CD4-positive, alpha-beta T cell (primary cell): ENCODE measurements at regions of chr1 and their contacts with region 1.

Region 1: GRCh38 chr1:156860113-156860627 is 495 bp upstream of the NTRK1 start:
- DNase-seq: peak; percentile 24 to 77 (median 50)
- ATAC-seq: peak; percentile 54
- H3K4me3 ChIP-seq: peak overlapping the region; percentile 52
- H3K4me3 Mint-ChIP-seq: peak overlapping the region; percentile 81
- H3K27ac ChIP-seq: no peak overlapping the region
- H3K27ac Mint-ChIP-seq: no peak overlapping the region
- H3K4me1 ChIP-seq: peaks cover 29% of the 10 kb centered on the region
- H3K4me1 Mint-ChIP-seq: peaks cover 30% of the 10 kb centered on the region
- H3K27me3 ChIP-seq: peaks cover 53 to 62% of the 10 kb centered on the region in 2 experiments
- H3K27me3 Mint-ChIP-seq: peaks cover 75% of the 10 kb centered on the region
- CTCF ChIP-seq: peak; percentile 87

Region 2: DNA sequence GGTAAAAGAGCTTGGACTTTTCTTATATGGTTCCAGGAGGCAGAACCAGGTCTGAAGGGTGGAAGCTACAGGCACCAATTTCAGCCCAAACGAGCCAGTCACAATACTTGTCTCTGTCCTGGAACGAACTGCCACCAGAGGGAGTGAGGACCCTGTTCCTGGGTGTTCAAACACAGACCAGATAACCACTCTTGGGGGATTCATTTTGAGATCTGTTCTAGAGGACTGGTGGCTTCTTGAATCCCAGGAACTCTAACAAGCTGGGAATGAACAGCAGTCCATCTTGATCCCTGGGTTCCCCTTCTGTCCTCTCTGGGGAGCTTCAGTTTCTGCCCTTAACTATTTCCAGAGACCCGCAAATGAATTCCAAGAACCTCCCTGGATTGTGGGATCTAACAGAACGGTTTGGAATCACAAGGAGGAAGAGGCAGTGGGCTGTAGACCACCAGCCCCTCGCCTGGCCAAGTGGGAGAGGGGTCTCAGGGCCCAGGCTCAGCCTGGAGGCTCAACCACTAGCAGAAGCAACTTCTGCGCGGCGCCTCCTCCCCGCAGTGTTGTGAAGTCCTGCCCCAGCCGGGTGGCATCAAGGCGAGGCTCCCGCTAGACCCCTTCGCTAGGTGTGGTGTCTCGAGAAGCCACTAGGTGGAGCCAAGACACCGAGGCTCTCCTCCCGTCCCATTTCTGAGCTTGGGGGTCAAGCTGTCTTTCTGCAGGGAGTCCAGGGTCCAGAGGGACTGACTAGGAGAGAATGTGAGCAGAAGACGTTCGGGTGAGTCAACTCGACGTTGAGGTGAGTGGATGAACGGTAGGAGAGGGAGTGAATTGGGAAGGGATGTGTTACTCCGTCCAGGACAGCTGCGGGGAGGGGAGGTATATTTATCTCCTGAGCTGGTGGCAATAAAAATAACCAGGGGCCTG is 170.9 kb before region 1 on chr1:
- CTCF ChIA-PET with region 1: interaction called, 11 read pairs
- POLR2A ChIA-PET with region 1: interaction called, 3 read pairs
- intact Hi-C with region 1: loop called in 1 of 2 experiments (anchors 2 kb)
- DNase-seq: peak; percentile 62 to 88 (median 71)
- ATAC-seq: peak; percentile 99
- H3K4me3 ChIP-seq: no peak overlapping the region
- H3K4me3 Mint-ChIP-seq: no peak overlapping the region
- H3K27ac ChIP-seq: no peak overlapping the region
- H3K27ac Mint-ChIP-seq: no peak overlapping the region
- H3K4me1 ChIP-seq: peaks cover 28% of the 10 kb centered on the region
- H3K4me1 Mint-ChIP-seq: peaks cover 31% of the 10 kb centered on the region
- H3K27me3 ChIP-seq: peaks cover 49 to 57% of the 10 kb centered on the region in 2 experiments
- H3K27me3 Mint-ChIP-seq: peaks cover 61% of the 10 kb centered on the region
- CTCF ChIP-seq: peak; percentile 95

Region 3: DNA sequence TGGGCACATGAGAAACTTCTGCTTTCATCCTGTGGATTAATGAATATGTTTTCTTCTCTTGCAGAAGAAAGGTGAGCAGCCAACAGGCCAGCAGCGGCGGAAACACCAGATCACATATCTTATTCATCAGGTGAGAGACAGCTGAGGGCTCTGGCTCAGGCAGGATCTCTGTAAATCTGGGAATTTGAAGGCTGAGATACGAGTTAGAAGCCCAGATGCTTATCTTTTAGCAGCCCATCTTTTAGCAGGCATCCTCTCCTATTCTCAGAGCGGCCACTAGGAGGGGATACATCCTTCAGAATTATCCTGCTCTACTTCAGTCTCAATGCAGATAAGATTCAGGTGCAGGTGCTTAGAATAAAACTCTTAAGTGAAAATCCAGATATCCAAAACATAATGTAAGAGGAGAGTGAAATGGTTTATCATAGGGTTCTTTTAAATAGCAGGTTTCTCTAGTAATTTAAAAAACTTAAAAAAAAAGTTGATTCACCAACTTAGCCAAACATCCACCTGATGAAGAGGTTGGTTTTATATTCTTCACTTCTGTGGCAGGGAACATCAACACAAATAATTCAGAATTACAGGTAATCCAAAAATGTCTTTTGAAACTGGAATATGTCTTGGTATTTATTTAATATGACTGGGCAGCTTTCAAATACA is 62.8 kb before region 1 on chr1:
- CTCF ChIA-PET with region 1: interaction called, 87 read pairs
- POLR2A ChIA-PET with region 1: interaction called, 18 read pairs
- intact Hi-C with region 1: loop called (anchors 1 kb)
- DNase-seq: peak in 13 of 14 experiments; percentile 26 to 84 (median 58)
- ATAC-seq: peak; percentile 92
- H3K4me3 ChIP-seq: no peak overlapping the region
- H3K4me3 Mint-ChIP-seq: no peak overlapping the region
- H3K27ac ChIP-seq: no peak overlapping the region
- H3K27ac Mint-ChIP-seq: peak overlapping the region; percentile 5
- H3K4me1 ChIP-seq: peaks cover 21% of the 10 kb centered on the region
- H3K4me1 Mint-ChIP-seq: peaks cover 8% of the 10 kb centered on the region
- H3K27me3 ChIP-seq: no peaks in the 10 kb centered on the region
- H3K27me3 Mint-ChIP-seq: no peaks in the 10 kb centered on the region
- CTCF ChIP-seq: peak; percentile 79

Region 4: DNA sequence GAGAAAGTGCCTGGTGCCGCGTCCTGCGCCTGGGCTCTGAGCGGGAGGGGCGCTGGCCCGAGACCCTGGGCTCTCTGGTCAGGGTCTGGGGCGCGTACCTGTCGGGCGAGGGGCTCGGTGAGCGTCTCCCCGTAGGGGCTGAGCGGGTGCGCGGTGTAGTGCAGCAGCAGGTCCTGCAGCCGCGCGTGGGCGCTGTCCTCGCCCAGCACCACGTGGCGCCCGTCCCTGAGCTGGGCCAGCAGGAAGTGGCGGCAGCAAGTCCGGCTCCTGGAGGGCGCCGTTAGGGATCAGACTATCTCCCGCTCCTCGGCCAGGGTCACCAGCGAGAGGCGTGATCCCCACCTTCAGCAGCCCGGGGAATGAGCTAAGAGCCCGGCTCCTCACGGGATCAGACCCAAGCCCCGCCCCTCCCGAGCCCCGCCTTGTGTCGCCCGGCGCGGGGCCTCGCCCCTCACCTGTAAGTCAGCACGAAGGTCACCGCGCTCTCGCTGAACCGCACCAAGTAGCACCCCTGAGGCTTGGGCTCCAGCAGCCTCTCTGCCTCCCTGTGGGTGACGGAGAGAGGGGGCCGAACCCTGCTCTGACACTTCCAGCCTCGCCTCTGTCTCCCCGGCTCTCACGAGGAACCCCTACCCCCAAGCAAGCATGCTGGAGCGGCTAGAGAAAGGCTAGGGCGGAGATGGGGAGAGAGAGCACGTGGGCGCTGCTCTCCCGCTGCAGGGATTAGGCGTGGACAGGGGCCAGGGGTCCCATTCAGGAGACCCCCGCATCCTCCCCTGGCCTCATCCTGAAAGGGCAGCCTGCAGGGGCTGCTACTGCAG is 46.2 kb before region 1 on chr1:
- CTCF ChIA-PET with region 1: interaction called, 27 read pairs
- POLR2A ChIA-PET with region 1: interaction called, 16 read pairs
- intact Hi-C with region 1: loop called in 1 of 2 experiments (anchors 2 kb)
- DNase-seq: peak; percentile 36 to 90 (median 70)
- ATAC-seq: peak; percentile 51
- H3K4me3 ChIP-seq: peak overlapping the region; percentile 73
- H3K4me3 Mint-ChIP-seq: peak overlapping the region; percentile 83
- H3K27ac ChIP-seq: peak overlapping the region; percentile 97 to 99
- H3K27ac Mint-ChIP-seq: peak overlapping the region; percentile 98
- H3K4me1 ChIP-seq: peaks cover 80% of the 10 kb centered on the region
- H3K4me1 Mint-ChIP-seq: peaks cover 58% of the 10 kb centered on the region
- H3K27me3 ChIP-seq: no peaks in the 10 kb centered on the region
- H3K27me3 Mint-ChIP-seq: peaks cover 6% of the 10 kb centered on the region
- CTCF ChIP-seq: peak; percentile 70

Region 5: GRCh38 chr1:156838981-156839410 is 21.2 kb before region 1 on chr1:
- CTCF ChIA-PET with region 1: interaction called, 52 read pairs
- POLR2A ChIA-PET with region 1: interaction called, 20 read pairs
- intact Hi-C with region 1: loop called (anchors 1 kb)
- DNase-seq: peak in 11 of 14 experiments; percentile 34 to 74 (median 42)
- ATAC-seq: peak; percentile 84
- H3K4me3 ChIP-seq: no peak overlapping the region
- H3K4me3 Mint-ChIP-seq: no peak overlapping the region
- H3K27ac ChIP-seq: no peak overlapping the region
- H3K27ac Mint-ChIP-seq: no peak overlapping the region
- H3K4me1 ChIP-seq: peaks cover 24% of the 10 kb centered on the region
- H3K4me1 Mint-ChIP-seq: peaks cover 12% of the 10 kb centered on the region
- H3K27me3 ChIP-seq: peaks cover 27 to 37% of the 10 kb centered on the region in 2 experiments
- H3K27me3 Mint-ChIP-seq: peaks cover 60% of the 10 kb centered on the region
- CTCF ChIP-seq: peak; percentile 85

Region 6: DNA sequence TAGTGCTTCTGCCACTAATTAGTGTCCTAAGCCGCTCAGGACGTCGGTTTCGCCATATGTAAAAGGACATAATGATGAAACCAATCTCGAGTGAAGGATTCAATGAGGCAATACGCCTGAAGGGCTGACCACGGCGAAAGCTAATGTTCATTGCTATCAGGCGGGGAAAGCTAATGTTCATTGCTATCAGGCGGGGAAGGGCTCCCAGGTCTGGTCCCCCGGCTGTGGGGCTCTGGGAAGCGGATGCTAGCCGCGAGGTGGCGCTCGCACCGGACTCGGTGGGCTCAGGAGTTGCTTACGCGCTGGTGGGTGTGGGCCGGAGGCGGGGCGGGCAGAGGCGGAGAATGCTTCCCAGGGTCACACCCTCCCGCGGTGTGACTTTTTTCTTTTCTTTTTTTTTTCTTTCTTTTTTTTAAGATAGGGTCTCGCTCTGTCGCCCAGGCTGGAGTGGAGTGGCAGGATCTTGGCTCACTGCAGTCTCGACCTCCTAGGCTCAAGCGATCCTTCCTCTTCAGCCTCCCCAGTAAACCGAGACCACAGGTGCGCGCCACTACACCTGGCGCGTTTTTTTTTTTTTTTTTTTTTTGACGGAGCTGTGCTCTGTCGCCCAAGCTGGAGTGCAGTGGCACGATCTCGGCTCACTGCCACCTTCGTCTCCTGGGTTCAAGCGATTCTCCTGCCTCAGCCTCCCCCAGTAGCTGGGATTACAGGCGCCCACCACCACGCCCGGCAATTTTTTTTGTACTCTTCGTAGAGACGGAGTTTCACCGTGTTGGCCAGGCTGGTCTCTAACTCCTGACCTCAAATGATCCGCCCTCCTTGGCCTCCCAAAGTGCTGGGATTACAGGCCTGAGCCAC is 32.2 kb after region 1 on chr1:
- CTCF ChIA-PET with region 1: interaction called, 15 read pairs
- POLR2A ChIA-PET with region 1: no interaction called
- intact Hi-C with region 1: no loop called
- DNase-seq: peak; percentile 71 to 92 (median 78)
- ATAC-seq: peak; percentile 92
- H3K4me3 ChIP-seq: peak overlapping the region; percentile 42
- H3K4me3 Mint-ChIP-seq: peak overlapping the region; percentile 82
- H3K27ac ChIP-seq: no peak overlapping the region
- H3K27ac Mint-ChIP-seq: no peak overlapping the region
- H3K4me1 ChIP-seq: peaks cover 29% of the 10 kb centered on the region
- H3K4me1 Mint-ChIP-seq: peaks cover 16% of the 10 kb centered on the region
- H3K27me3 ChIP-seq: peaks cover 39 to 51% of the 10 kb centered on the region in 2 experiments
- H3K27me3 Mint-ChIP-seq: peaks cover 73% of the 10 kb centered on the region
- CTCF ChIP-seq: peak; percentile 76